Natural killer cell (primary cell): ENCODE measurements at regions of chr18 and their contacts with region 1.

Region 1: GRCh38 chr18:48030616-48031480 is 100.4 kb upstream of the SMAD2 start:
- DNase-seq: no peak
- ATAC-seq: no peak
- H3K4me3 ChIP-seq: no peak overlapping the region
- H3K4me3 Mint-ChIP-seq: no peak overlapping the region
- H3K27ac ChIP-seq: no peak overlapping the region
- H3K27ac Mint-ChIP-seq: no peak overlapping the region
- H3K4me1 ChIP-seq: no peaks in the 10 kb centered on the region
- H3K4me1 Mint-ChIP-seq: no peaks in the 10 kb centered on the region
- H3K27me3 ChIP-seq: no peaks in the 10 kb centered on the region
- H3K27me3 Mint-ChIP-seq: no peaks in the 10 kb centered on the region
- CTCF ChIP-seq: no peak

Region 2: GRCh38 chr18:48445540-48445939 is 414.7 kb after region 1 on chr18:
- intact Hi-C with region 1: loop called (anchors 10 kb)
- DNase-seq: peak; percentile 51 to 80
- ATAC-seq: peak; percentile 77 to 86 (median 80)
- H3K4me3 ChIP-seq: no peak overlapping the region
- H3K4me3 Mint-ChIP-seq: no peak overlapping the region
- H3K27ac ChIP-seq: no peak overlapping the region
- H3K27ac Mint-ChIP-seq: no peak overlapping the region
- H3K4me1 ChIP-seq: no peaks in the 10 kb centered on the region
- H3K4me1 Mint-ChIP-seq: peaks cover 6% of the 10 kb centered on the region in 2 donors
- H3K27me3 ChIP-seq: no peaks in the 10 kb centered on the region
- H3K27me3 Mint-ChIP-seq: peaks cover 14 to 24% of the 10 kb centered on the region in 2 donors
- CTCF ChIP-seq: peak; percentile 76